ENCODE measurements at regions of chr19 and their contacts with region 1.

Region 1: GRCh38 chr19:6125571-6125989 is 9.9 kb upstream of the ACSBG2 start:
- DNase-seq: peak; percentile 52 to 61
- H3K4me3 ChIP-seq: no peak overlapping the region
- H3K27ac ChIP-seq: no peak overlapping the region
- H3K4me1 ChIP-seq: no peaks in the 10 kb centered on the region
- H3K27me3 ChIP-seq: no peaks in the 10 kb centered on the region
- CTCF ChIP-seq: peak; percentile 94

Region 2: GRCh38 chr19:5987077-5987818 is 138.3 kb before region 1 on chr19:
- CTCF ChIA-PET with region 1: no interaction called
- POLR2A ChIA-PET with region 1: no interaction called
- intact Hi-C with region 1: loop called (anchors 5 kb)
- DNase-seq: peak; percentile 53 to 58
- H3K4me3 ChIP-seq: no peak overlapping the region
- H3K27ac ChIP-seq: no peak overlapping the region
- H3K4me1 ChIP-seq: 0 out of 2 replicates have a peak, but pooled peaks cover 5% of the 10 kb centered on the region
- H3K27me3 ChIP-seq: no peaks in the 10 kb centered on the region
- CTCF ChIP-seq: peak; percentile 86

Region 3: DNA sequence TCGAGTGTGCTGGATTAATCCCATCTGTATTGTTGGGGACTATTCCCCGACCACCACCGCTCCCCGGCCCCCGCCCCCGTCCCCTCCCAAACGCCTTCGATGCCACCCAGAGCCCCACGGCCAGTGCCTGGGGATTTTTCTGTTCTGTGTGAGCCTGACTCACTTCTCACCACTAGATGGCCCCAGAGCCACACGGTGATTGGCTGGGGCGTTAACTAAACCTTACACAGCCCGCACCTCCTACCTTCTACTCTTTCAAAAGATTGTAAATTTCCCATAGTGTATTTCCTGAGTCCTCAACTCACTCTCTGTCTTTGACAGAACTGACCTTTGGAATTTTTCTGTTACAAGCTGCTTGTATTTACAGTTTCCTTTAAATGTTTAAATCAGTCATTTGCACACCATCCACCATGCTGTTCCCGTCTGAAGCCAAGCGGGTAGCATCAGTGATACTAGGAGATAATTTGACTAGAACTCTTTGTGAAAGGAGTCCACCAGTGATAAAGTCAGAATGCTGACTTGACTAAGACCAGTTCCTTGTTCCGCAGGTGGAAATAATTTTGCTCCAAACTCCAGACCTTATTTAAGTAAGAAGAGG is 76.7 kb before region 1 on chr19:
- CTCF ChIA-PET with region 1: interaction called, 4 read pairs
- POLR2A ChIA-PET with region 1: no interaction called
- intact Hi-C with region 1: loop called (anchors 1 kb)
- DNase-seq: peak; percentile 57 to 64
- H3K4me3 ChIP-seq: no peak overlapping the region
- H3K27ac ChIP-seq: no peak overlapping the region
- H3K4me1 ChIP-seq: peaks cover 4% of the 10 kb centered on the region; the same call in 1 of the 2 replicates
- H3K27me3 ChIP-seq: no peaks in the 10 kb centered on the region
- CTCF ChIP-seq: peak; percentile 78

Region 4: DNA sequence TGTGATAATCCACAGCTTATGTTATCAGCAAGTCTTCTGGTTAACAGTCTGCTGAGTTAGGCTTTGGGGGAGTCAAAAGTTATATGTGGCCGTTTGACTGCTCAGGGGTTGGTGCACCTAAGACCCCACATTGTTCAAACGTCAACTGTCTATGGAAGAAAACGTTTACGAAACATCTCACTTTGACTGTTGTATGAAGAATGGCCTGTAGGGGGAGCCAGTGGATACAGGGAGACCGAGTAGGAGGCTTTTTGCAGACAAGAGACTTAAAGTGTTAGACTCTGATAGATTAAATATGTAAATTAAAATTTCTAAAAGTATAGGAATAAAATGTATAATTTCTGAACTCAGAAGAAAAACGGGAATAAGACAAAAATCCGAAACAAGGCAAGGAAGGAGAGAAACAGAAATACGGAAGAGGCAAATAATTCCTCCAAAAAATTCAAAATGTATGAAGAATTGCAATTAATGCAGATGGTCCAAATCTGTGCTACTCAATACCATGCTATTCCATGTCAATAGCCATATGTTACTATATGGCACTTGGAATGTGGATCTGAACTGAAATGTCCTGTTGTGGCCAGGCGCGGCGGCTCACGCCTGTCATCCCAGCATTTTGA is 506.5 kb after region 1 on chr19:
- CTCF ChIA-PET with region 1: no interaction called
- POLR2A ChIA-PET with region 1: interaction called, 4 read pairs
- intact Hi-C with region 1: loop called (anchors 5 kb)
- DNase-seq: peak; percentile 50 to 60
- H3K4me3 ChIP-seq: no peak overlapping the region
- H3K27ac ChIP-seq: no peak overlapping the region
- H3K4me1 ChIP-seq: no peaks in the 10 kb centered on the region
- H3K27me3 ChIP-seq: no peaks in the 10 kb centered on the region
- CTCF ChIP-seq: peak; percentile 80

Measured in PC-9 (cell line).